ENCODE measurements at regions of chr14 and their contacts with region 1.

Region 1: DNA sequence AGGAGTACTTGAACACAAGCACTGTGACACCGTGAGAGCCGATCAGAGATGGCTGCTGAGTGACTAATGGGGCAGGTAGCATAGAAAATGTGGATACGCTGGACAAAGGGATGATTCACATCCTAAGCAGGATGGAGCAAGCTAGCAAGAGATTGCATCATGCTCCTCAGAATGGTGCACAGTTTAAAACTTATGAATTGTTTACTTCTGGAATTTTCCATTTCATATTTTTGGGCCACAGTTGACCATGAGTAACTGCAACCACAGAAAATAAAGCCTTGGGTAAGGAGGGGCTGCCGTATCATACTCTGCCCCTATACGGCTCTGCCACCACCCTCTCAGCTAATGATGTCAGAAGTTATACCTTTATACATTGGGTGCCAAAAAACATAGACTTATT is 23.3 kb upstream of the MARK3 start:
- DNase-seq: peak; percentile 98
- H3K4me3 ChIP-seq: no peak overlapping the region
- H3K27ac ChIP-seq: peak overlapping the region; percentile 83
- H3K4me1 ChIP-seq: peaks cover 23% of the 10 kb centered on the region
- H3K27me3 ChIP-seq: no peaks in the 10 kb centered on the region
- CTCF ChIP-seq: no peak

Region 2: GRCh38 chr14:103372603-103373304 is 10.9 kb after region 1 on chr14:
- CTCF ChIA-PET with region 1: no interaction called
- dilution Hi-C with region 1: no loop called
- in situ Hi-C with region 1: no loop called
- intact Hi-C with region 1: loop called (anchors 1 kb)
- DNase-seq: peak; percentile 99
- H3K4me3 ChIP-seq: no peak overlapping the region
- H3K27ac ChIP-seq: peak overlapping the region; percentile 72
- H3K4me1 ChIP-seq: peaks cover 14% of the 10 kb centered on the region
- H3K27me3 ChIP-seq: no peaks in the 10 kb centered on the region
- CTCF ChIP-seq: no peak

Measured in mammary epithelial cell (primary cell).